Posterior vena cava (tissue), 2 donors: ENCODE measurements at regions of chr5 and their contacts with region 1.

Region 1: DNA sequence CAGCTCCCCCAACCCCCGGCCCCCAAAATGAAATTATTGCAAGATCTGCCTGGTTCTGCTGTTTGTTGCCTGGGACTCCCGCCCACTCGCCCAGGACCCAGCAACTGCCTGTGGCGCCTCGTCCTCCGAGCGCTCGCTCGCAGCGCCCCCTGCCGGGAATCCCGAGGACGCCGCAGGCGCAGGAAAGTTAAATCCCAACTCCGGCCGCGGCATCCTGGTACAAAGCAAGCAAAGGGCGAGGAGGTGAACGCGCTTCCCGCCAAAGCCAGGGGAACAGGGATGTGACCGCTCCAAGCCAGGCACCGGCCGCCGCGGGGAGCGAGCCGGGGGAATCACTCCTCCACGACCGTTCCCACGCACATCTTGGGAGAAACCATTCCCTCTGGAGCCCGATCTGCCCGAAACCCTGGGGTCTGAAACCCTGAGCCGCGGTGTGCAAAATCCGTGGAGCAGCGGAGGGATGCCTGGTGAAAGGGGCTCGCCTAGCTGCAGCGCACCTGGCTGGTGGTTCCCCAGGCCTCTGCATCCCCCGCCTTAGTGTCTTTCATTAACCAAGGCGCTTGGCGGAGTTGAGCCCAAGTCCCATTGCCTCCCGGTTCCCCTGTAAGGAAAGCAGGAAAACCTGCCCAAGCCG is 1.3 kb downstream of the SEMA5A start:
- DNase-seq: peak; percentile 95

Region 2: DNA sequence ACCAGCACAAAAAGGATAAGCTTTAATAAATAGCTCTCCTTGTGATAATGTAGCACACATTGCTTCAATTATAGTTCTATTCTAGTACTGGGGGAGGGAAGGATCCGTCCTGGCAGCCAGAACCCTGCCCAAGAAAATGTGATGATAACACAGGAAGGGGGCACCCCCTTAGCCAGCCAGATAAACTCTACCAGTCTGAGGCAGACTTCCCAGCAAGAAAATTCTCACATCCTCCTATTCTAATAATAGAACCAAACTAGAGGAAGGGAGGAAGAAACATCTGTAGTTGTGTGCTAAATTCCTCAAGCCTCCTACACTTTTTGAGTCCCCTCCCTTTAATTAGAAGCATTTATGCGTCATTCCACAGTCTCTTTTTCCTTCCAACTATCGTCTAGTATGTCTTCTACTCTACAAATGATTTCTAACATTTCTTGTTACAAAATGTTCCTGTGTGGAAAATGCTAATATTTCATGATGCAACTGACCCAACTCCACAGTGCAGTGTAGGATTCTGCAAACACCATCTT is 259.8 kb before region 1 on chr5:
- intact Hi-C with region 1: loop called in 1 of 2 experiments (anchors 10 kb)
- DNase-seq: peak; percentile 77

Region 3: DNA sequence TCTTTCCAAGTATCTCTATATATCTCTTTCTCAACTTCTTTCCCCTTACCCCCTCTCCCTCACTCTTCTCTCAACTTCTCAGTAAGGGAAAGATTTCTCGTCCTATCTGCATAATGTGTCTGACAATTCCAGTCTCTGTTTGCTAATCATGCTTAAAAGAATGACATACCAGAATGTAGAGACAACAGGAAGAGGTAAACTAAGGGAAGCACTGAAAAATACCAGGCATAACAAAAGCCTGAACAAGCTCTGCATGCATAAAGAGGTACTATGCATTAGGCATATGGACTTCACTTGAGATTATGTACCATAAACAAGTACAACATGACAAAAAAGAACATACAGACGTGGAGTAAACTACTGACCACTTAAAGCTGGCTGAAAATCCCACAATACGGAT is 61.4 kb before region 1 on chr5:
- intact Hi-C with region 1: no loop called
- DNase-seq: no peak

Region 4: DNA sequence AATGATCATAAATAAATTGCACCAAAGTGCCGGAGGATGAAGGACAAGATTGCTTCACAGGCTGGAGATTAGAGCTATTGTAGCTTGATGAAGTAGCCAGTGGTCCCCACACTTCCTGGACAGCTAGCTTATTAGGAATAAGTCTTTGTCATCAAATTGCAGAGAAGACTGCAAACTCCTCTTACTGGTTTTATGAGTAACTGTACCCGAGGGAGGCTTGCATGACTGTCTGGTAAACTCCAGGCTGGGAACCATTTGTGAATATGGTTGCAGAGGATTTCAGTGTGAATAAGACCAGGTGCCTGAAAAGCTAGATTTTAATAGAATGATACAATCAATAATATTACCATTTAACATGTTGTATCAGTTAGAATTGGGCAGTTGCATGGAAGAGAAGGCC is 37.8 kb after region 1 on chr5:
- intact Hi-C with region 1: no loop called
- DNase-seq: no peak